Lower lobe of right lung (tissue), 2 donors: ENCODE measurements at regions of chr14 and their contacts with region 1.

Region 1: DNA sequence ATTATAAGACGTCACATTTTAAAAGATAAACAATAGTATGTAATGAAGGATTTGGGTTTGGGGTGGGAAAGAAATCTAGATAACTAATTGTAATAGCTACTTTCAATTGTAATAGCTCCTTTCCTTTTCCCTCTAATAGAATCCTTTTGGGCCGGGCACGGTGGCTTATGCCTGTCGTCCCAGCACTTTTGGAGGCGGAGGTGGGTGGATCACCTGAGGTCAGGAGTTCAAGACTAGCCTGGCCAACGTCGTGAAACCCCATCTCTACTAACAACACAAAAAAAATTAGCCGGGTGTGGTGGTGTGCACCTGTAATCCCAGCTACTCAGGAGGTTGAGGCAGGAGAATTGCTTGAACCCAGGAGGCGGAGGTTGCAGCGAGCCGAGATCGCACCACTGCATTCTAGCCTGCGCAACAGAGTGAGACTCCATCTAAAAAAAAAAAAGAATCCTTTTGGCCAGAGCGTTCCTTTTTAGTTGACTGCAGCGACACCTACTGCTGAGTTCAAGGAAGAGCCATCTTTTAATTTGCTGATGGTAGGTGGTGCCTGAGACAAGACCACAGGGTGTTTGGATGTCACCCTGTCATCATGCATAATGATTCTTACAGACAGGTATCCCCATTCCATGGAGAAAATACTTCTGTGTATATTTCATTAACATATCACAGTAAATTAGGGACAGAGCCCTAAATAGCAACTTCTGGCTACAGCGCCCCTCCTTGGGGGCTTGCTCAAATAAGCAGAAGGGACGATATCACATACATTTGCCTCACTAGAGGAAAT is 79.5 kb downstream of the ARMH4 start:
- DNase-seq: no peak
- ATAC-seq: peak; percentile 77 to 78
- H3K4me3 ChIP-seq: no peak overlapping the region
- H3K27ac ChIP-seq: no peak overlapping the region
- H3K4me1 ChIP-seq: peaks cover 6% of the 10 kb centered on the region
- H3K27me3 ChIP-seq: no peaks in the 10 kb centered on the region
- CTCF ChIP-seq: peak; percentile 62

Region 2: DNA sequence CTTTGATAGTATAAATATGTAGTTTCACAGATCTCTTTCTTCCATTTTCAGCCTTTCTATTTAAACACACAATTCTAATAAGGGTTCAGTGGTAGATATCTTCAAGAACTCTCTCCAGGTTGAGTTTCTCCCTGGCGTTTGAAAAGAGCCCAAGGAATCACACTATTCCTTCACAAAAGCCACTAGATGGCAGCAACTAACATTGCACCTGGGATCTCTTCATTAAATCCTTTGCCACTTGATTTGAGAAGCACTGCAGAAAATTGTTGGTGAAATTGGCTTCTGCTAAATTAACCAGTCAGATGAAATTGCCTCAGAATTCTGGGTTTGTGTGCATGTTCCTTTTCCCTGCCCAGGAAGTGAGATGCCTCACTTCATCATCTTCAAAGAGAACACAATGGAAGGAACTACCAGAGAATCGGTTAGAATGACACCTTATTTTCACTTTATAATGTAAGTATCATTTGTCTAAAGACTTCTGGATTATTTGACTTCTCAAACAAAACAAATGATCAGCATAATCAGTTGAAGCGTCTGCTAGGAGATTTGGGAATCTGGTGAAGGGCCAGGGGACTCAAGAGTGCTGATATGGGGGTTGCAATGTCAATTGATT is 585.6 kb before region 1 on chr14:
- intact Hi-C with region 1: loop called (anchors 10 kb)
- DNase-seq: no peak
- ATAC-seq: no peak
- H3K4me3 ChIP-seq: no peak overlapping the region
- H3K27ac ChIP-seq: no peak overlapping the region
- H3K4me1 ChIP-seq: no peaks in the 10 kb centered on the region
- H3K27me3 ChIP-seq: no peaks in the 10 kb centered on the region
- CTCF ChIP-seq: peak; percentile 52

Region 3: DNA sequence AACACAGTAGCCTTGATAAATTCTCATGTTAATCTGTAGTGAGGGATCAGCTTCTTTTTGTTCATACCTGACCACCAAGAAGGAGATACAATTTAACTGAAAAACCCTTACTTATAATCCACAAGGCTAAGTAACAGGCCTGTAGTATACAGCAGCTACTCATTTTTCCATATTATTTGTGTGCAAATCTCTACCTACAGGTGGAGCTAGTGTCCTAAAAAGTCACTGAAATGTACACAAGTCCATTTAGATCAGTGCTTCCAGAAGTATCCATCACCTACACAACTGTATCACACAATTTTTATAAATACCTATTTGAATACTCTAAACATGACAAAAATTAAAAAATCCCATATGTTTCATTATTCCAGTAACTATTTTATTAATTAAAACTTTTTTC is 379.8 kb before region 1 on chr14:
- intact Hi-C with region 1: loop called (anchors 5 kb)
- DNase-seq: no peak
- ATAC-seq: peak in 1 of 2 donors; percentile 66
- H3K4me3 ChIP-seq: no peak overlapping the region
- H3K27ac ChIP-seq: no peak overlapping the region
- H3K4me1 ChIP-seq: no peaks in the 10 kb centered on the region
- H3K27me3 ChIP-seq: no peaks in the 10 kb centered on the region
- CTCF ChIP-seq: peak; percentile 40

Region 4: GRCh38 chr14:58961045-58961731 is 888.7 kb after region 1 on chr14:
- intact Hi-C with region 1: no loop called
- DNase-seq: no peak
- ATAC-seq: no peak
- H3K4me3 ChIP-seq: no peak overlapping the region
- H3K27ac ChIP-seq: no peak overlapping the region
- H3K4me1 ChIP-seq: no peaks in the 10 kb centered on the region
- H3K27me3 ChIP-seq: no peaks in the 10 kb centered on the region
- CTCF ChIP-seq: no peak